Vagina (tissue), 2 donors: ENCODE measurements at regions of chr6 and their contacts with region 1.

Region 1: DNA sequence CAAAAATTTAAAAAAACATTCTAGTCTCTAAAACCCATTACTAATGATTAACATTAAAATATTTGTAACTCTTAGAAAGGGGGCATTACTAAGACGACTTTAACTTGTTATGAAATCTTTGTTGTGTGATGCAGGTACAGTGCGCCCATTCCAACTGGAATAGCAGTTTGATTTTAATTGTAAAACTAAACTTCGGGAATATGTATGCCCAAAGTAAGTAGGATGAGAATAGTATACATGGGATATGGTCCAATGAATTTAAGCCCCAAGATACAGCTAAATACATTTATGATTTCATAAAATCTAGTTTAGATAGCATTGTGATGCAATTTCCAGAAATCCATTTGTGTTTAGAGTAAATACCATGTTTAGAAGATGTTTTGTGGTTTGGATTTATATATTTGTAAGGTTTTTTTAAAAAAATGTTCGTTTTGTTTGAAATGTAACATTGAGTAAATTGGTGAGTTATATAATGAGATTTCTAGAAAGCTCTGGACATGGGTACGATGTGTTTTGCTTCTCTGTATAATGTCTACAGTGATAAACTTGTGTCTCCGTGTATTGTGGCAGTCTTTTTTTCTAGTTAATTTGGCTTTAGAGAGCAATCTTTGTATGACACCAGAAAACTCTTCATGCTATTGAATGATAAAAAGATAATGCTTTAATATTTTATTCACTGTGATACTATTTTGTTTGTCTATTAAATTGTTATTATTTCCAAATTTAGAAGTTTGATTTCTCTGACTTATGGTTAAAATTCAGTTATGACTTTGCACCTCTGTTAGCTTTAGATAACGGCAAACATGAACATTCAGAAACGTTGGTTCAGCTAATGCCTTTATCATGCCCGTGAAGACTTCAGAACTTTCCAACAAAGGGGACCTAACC is 54.8 kb downstream of the RNF182 start:
- DNase-seq: no peak
- H3K4me3 ChIP-seq: no peak overlapping the region
- H3K27ac ChIP-seq: no peak overlapping the region
- H3K4me1 ChIP-seq: no peaks in the 10 kb centered on the region
- H3K27me3 ChIP-seq: no peaks in the 10 kb centered on the region
- CTCF ChIP-seq: no peak
- POLR2A ChIP-seq: no peak

Region 2: DNA sequence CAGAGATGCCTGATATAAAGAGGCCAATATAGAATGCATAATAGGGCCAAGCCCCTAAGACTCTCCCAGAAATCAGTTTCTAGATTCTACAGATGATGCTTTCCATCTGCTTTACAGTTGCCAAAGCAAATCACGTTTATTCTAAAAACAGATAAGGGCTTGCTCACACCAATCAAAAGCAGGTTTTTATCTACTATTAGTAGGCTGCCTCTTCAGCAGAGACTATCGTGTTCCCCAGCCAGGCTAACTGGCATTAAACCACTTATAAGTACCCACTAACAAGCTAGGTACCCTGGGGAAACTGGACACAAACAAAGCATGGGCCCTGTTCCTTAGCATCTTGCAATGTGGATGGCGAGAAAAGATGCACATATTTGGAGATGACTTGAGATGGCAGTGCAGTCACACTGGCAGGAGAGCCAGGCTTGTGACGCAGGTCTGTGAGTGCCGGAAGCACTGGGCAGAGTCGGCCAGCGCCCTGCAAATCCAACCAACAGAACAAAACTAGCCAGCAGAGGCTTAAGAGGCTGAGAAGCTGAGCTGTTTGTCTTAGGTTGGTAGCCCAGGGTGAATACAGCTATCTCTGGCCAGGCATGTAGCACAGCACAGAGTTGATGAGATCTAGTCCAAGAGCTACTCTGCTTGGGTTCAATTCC is 565.5 kb before region 1 on chr6:
- intact Hi-C with region 1: no loop called
- DNase-seq: no peak
- H3K4me3 ChIP-seq: no peak overlapping the region
- H3K27ac ChIP-seq: no peak overlapping the region
- H3K4me1 ChIP-seq: peaks cover 34% of the 10 kb centered on the region
- H3K27me3 ChIP-seq: no peaks in the 10 kb centered on the region
- CTCF ChIP-seq: no peak
- POLR2A ChIP-seq: no peak

Region 3: DNA sequence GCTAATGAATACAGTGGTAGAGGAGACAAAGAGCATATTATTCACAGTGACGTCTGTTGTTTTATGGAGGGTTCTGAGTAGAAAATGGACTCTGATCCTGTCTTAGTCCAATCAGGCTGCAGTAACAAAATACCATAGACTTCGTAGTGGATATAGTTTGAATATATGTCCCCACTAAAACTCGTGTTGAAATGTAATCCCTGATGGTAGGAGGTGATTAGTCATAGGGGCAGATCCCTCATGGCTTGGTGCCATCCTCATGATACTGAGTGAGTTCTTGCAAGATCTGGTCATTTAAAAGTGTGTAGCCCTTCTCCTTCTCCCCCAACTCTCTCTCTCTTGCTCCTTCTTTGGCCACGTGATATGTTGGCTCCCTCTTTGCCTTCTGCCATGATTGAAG is 220.5 kb after region 1 on chr6:
- intact Hi-C with region 1: no loop called
- DNase-seq: no peak
- H3K4me3 ChIP-seq: no peak overlapping the region
- H3K27ac ChIP-seq: no peak overlapping the region
- H3K4me1 ChIP-seq: no peaks in the 10 kb centered on the region
- H3K27me3 ChIP-seq: no peaks in the 10 kb centered on the region
- CTCF ChIP-seq: no peak
- POLR2A ChIP-seq: no peak

Region 4: GRCh38 chr6:14228571-14228970 is 249.0 kb after region 1 on chr6:
- intact Hi-C with region 1: no loop called
- DNase-seq: no peak
- H3K4me3 ChIP-seq: no peak overlapping the region
- H3K27ac ChIP-seq: no peak overlapping the region
- H3K4me1 ChIP-seq: no peaks in the 10 kb centered on the region
- H3K27me3 ChIP-seq: no peaks in the 10 kb centered on the region
- CTCF ChIP-seq: no peak
- POLR2A ChIP-seq: no peak

Region 5: DNA sequence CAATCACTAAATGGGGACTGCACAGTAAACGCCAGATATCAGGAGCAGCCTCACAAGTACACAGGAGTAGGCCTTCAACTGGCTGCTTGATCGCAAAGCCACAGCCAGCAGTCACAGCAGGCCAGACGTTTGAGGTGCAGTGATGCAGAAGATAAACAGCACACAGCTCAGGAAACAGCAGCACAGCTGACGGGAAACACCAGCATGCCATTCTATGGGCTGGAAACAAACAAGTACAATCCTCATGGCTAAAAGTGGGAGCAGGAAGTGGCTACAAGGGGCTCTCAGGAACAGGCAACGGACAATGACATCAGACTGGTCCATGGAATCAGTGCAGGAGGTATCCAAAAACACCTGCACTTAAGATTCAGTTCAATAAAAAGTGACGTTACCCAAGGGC is 1572.3 kb after region 1 on chr6:
- intact Hi-C with region 1: loop called (anchors 5 kb)
- DNase-seq: no peak
- H3K4me3 ChIP-seq: no peak overlapping the region
- H3K27ac ChIP-seq: no peak overlapping the region
- H3K4me1 ChIP-seq: peaks cover 14% of the 10 kb centered on the region
- H3K27me3 ChIP-seq: no peaks in the 10 kb centered on the region
- CTCF ChIP-seq: no peak
- POLR2A ChIP-seq: no peak